Right cardiac atrium (tissue), 5 donors: ENCODE measurements at regions of chr4 and their contacts with region 1.

Region 1: GRCh38 chr4:184474263-184475095 is at the start of gene IRF2:
- DNase-seq: peak; percentile 98 to 99 (median 98)
- ATAC-seq: peak; percentile 94 to 96
- H3K4me3 ChIP-seq: peak within 1 kb of the TSS; percentile 98
- H3K27ac ChIP-seq: peak within 1 kb of the TSS; percentile 94
- H3K4me1 ChIP-seq: peaks cover 3% of the 10 kb centered on the region
- H3K27me3 ChIP-seq: no peaks in the 10 kb centered on the region
- total RNA-seq, gene IRF2: 19.6 to 39.3 (median 28.4) TPM

Region 2: DNA sequence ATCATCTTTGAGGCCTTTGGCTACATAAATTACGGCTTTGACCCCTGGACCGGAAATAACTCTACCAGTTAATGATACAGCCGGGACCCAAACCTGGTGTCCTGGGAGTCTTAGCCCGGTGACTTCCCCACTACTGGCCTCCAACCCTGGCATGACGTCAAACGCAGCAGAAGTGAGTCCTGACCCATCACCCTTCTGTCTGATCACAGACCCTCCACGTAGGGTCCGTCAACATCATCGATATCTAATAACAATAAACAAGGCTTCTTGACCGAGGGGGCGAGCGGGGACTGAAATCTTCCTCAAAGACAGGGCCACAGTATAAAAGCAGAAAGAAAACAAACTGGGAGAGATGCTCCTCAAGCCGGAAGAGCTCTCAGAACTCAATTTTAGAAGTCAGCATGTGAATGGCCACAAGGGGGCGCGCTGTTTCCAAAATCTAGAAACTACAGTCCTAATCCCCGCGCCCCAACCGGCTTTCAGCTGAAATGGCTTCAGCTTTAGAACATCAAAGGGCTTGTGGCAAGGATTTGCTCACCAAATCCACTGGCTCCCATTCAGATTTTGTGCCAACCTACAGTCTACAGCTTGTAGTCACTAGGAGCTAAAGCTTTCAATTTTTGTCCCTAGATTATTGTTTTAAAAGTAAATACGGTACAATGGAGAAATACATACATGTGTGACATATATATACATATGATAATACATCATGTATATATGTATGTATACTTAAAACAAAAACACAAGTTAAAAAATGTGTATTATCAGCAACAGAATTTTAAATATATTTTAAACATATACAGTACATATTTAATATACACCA is 210.4 kb before region 1 on chr4:
- intact Hi-C with region 1: loop called in 1 of 4 experiments (anchors 10 kb)
- DNase-seq: peak; percentile 94 to 97 (median 94)
- ATAC-seq: peak; percentile 82 to 84
- H3K4me3 ChIP-seq: peak overlapping the region; percentile 20
- H3K27ac ChIP-seq: no peak overlapping the region
- H3K4me1 ChIP-seq: peaks cover 3% of the 10 kb centered on the region
- H3K27me3 ChIP-seq: no peaks in the 10 kb centered on the region

Region 3: GRCh38 chr4:184347251-184348239 is 126.9 kb before region 1 on chr4:
- intact Hi-C with region 1: loop called in 1 of 4 experiments (anchors 5 kb)
- DNase-seq: peak; percentile 67 to 76 (median 74)
- ATAC-seq: peak; percentile 35 to 58
- H3K4me3 ChIP-seq: no peak overlapping the region
- H3K27ac ChIP-seq: peak overlapping the region; percentile 90
- H3K4me1 ChIP-seq: peaks cover 24% of the 10 kb centered on the region
- H3K27me3 ChIP-seq: no peaks in the 10 kb centered on the region

Region 4: GRCh38 chr4:184384056-184384809 is 90.2 kb before region 1 on chr4:
- intact Hi-C with region 1: loop called in 1 of 4 experiments (anchors 5 kb)
- DNase-seq: peak in 2 of 3 donors; percentile 46 to 70
- ATAC-seq: peak; percentile 83 to 84
- H3K4me3 ChIP-seq: peak overlapping the region; percentile 30
- H3K27ac ChIP-seq: peak overlapping the region; percentile 54
- H3K4me1 ChIP-seq: peaks cover 37% of the 10 kb centered on the region
- H3K27me3 ChIP-seq: no peaks in the 10 kb centered on the region

Region 5: GRCh38 chr4:184417802-184418511 is 56.5 kb before region 1 on chr4:
- intact Hi-C with region 1: loop called in 2 of 4 experiments (anchors 5 to 10 kb)
- DNase-seq: peak in 1 of 3 donors; percentile 71
- ATAC-seq: peak; percentile 32 to 43
- H3K4me3 ChIP-seq: no peak overlapping the region
- H3K27ac ChIP-seq: no peak overlapping the region
- H3K4me1 ChIP-seq: peaks cover 17% of the 10 kb centered on the region
- H3K27me3 ChIP-seq: no peaks in the 10 kb centered on the region

Region 6: DNA sequence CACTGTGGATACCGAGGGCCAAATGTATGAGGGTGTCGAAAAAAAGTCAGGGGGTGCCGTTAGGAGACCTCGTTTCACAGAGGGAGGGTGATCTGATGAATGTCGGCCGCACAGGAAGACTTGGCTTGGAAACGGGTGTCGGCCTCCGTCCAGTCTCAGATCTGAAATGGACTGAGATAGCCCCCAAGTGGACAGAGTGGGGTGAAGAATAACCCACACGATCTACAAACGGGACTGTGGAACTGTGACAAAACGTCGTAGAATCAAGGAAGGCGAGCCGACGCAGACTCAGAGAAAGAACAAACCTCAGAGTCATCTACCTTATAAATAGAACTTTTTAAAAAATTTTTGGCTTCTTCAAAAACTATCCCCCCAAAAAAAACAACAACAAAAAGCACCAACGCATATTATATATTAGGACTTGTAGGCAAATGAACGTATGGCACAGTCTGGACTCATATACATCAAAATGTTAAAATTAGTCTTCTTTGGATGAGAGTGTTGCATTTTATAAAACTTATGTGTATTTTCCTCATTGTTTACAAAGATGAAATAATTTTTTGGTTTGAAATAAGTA is 63.6 kb after region 1 on chr4:
- intact Hi-C with region 1: loop called in 3 of 4 experiments (anchors 2 to 10 kb)
- DNase-seq: peak; percentile 91 to 97 (median 94)
- ATAC-seq: peak; percentile 94 to 95
- H3K4me3 ChIP-seq: peak overlapping the region; percentile 82
- H3K27ac ChIP-seq: peak overlapping the region; percentile 66
- H3K4me1 ChIP-seq: no peaks in the 10 kb centered on the region
- H3K27me3 ChIP-seq: no peaks in the 10 kb centered on the region